Right ventricle myocardium inferior (tissue), 1 donor: ENCODE measurements at regions of chr11 and their contacts with region 1.

Region 1: GRCh38 chr11:36086366-36086765 is 142.5 kb downstream of the LDLRAD3 start:
- DNase-seq: no peak
- ATAC-seq: no peak

Region 2: GRCh38 chr11:36065436-36065835 is 20.9 kb before region 1 on chr11:
- intact Hi-C with region 1: loop called (anchors 1 kb)
- DNase-seq: no peak
- ATAC-seq: no peak